PC-3 (cell line): ENCODE measurements at regions of chr5 and their contacts with region 1.

Region 1: DNA sequence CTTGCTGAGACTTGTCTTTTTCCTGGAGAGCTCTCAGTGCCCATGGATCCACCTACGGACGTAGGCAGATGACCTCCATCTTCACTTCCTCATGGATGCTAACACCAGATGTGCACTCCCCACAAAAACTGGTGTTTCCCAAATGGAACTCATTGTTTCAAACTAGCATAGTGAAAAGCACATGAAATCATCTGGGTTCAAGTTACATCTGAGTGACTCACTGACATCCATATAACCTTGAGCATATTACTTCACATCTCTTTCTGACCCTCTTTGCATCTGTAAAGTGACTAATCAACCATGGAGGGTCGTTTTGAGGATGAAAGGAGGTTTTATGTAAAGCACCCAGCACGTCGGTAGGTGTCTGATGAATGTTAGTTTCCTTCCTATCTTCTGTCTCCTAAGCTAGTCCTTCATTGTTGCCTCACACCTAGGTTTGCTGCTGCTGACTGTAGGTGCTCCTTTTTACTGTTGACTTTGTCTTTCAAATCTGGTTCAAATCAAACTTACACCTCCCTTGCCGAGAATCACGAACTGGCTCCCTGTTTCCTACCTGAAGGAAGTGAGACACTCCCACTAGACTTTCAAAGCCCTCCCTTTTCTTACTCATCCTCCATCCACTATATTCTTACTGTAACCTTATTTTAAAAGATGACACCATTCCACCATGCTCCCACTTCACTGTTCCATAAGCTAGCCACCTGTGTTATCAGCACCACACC is 10.3 kb downstream of the OCLN start:
- DNase-seq: peak; percentile 42
- ATAC-seq: peak; percentile 34; the same call in 1 of the 2 replicates
- H3K4me3 ChIP-seq: peak overlapping the region; percentile 31; the same call in 1 of the 2 replicates
- H3K27ac ChIP-seq: peak overlapping the region; percentile 79
- H3K4me1 ChIP-seq: peaks cover 48% of the 10 kb centered on the region
- H3K27me3 ChIP-seq: no peaks in the 10 kb centered on the region
- CTCF ChIP-seq: no peak

Region 2: DNA sequence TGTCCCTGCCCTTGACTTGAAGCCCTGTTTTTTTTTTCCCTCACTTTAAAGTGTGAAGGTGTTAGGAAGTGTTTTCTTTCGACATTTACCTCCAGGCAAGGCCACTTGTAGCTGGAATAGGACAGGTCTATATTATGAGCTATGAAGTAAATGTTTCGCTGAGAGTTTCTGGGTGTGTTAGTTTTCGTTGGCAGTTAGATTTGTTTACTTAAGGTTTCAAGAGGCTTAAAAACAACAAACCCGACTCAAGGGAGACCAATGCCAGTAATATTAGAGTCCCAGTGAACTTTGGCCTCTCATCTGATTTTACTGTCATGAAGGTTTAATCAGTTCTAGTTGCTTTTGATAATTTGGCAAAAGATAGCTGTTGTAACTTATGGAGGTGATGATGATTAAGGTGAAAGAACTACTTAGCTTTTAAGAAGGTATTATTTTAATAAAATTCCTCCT is 14.9 kb after region 1 on chr5:
- CTCF ChIA-PET with region 1: no interaction called
- POLR2A ChIA-PET with region 1: interaction called, 3 read pairs
- intact Hi-C with region 1: loop called (anchors 2 kb)
- DNase-seq: peak; percentile 79
- ATAC-seq: peak; percentile 52
- H3K4me3 ChIP-seq: peak overlapping the region; percentile 38; the same call in 1 of the 2 replicates
- H3K27ac ChIP-seq: peak overlapping the region; percentile 98
- H3K4me1 ChIP-seq: peaks cover 66% of the 10 kb centered on the region
- H3K27me3 ChIP-seq: no peaks in the 10 kb centered on the region
- CTCF ChIP-seq: no peak